ENCODE measurements at regions of chr6 and their contacts with region 1.

Region 1: GRCh38 chr6:45192556-45192955 is 135.6 kb upstream of the RUNX2 start:
- DNase-seq: no peak
- ATAC-seq: no peak
- H3K4me3 ChIP-seq: no peak overlapping the region
- H3K27ac ChIP-seq: no peak overlapping the region
- H3K4me1 ChIP-seq: no peaks in the 10 kb centered on the region
- H3K27me3 ChIP-seq: no peaks in the 10 kb centered on the region

Region 2: GRCh38 chr6:44674351-44675155 is 518.0 kb before region 1 on chr6:
- intact Hi-C with region 1: loop called in 1 of 2 experiments (anchors 5 kb)
- DNase-seq: no peak
- ATAC-seq: no peak
- H3K4me3 ChIP-seq: no peak overlapping the region
- H3K27ac ChIP-seq: no peak overlapping the region
- H3K4me1 ChIP-seq: no peaks in the 10 kb centered on the region
- H3K27me3 ChIP-seq: no peaks in the 10 kb centered on the region

Region 3: DNA sequence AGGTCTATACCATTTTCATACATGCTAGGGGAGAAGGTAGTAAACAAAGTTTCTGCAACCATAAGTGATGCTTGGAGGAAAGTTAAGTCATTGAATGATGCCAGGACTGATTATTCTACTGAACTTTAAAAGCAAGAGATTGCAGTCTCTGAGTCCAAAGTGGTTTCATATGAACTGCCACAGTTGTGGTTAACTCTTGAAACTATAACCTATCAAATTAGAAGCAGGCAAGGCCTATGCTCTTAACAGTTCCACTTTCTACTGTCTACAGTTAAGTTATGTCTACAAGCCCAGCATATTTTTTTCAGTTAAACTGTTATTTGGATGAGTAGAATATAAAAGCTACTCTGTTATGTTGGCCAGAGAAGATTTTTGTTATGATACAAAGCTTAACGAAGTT is 190.9 kb before region 1 on chr6:
- intact Hi-C with region 1: no loop called
- DNase-seq: no peak
- ATAC-seq: no peak
- H3K4me3 ChIP-seq: no peak overlapping the region
- H3K27ac ChIP-seq: no peak overlapping the region
- H3K4me1 ChIP-seq: no peaks in the 10 kb centered on the region
- H3K27me3 ChIP-seq: no peaks in the 10 kb centered on the region